Aorta (tissue), 5 donors: ENCODE measurements at regions of chr15 and their contacts with region 1.

Region 1: GRCh38 chr15:87167044-87167443 is 1087.4 kb downstream of the AGBL1 start:
- DNase-seq: no peak
- ATAC-seq: no peak
- H3K4me3 ChIP-seq: no peak overlapping the region
- H3K27ac ChIP-seq: no peak overlapping the region
- H3K4me1 ChIP-seq: no peaks in the 10 kb centered on the region
- H3K27me3 ChIP-seq: peaks cover 0 to 2% of the 10 kb centered on the region in 2 donors

Region 2: DNA sequence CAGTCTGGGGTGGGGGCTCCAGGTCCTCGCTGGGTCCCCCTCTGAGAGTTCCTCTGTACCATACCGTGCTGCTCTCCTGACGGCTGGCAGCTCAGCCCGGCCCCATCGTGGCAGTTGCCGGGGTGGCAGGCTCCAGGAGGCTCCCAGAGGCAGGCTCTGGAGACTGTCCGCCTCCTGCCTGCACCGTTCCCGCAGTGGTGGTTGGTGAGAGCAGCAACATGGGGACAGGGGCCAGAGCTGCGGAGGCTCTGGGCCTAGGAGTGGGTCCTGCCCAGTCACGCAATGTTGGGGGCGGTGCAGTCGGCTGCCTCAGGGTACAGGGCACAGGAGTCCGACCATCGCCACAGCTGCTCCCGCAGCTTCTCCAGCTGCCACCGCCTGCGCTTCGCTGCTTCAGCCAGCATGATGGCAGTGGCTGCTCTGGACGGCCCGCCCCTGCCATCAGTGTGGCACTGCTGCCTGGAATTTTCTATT is 594.6 kb before region 1 on chr15:
- intact Hi-C with region 1: loop called in 1 of 2 experiments (anchors 10 kb)
- DNase-seq: no peak
- ATAC-seq: peak; percentile 19
- H3K4me3 ChIP-seq: no peak overlapping the region
- H3K27ac ChIP-seq: no peak overlapping the region
- H3K4me1 ChIP-seq: no peaks in the 10 kb centered on the region
- H3K27me3 ChIP-seq: no peaks in the 10 kb centered on the region

Region 3: GRCh38 chr15:87154767-87155166 is 12.3 kb before region 1 on chr15:
- intact Hi-C with region 1: no loop called
- DNase-seq: no peak
- ATAC-seq: no peak
- H3K4me3 ChIP-seq: no peak overlapping the region
- H3K27ac ChIP-seq: no peak overlapping the region
- H3K4me1 ChIP-seq: no peaks in the 10 kb centered on the region
- H3K27me3 ChIP-seq: no peaks in the 10 kb centered on the region